ENCODE measurements at regions of chr3 and their contacts with region 1.

Region 1: GRCh38 chr3:62329974-62330373 is 43.4 kb downstream of the FEZF2 start:
- DNase-seq: no peak
- ATAC-seq: no peak
- H3K4me3 ChIP-seq: no peak overlapping the region
- H3K27ac ChIP-seq: no peak overlapping the region
- H3K4me1 ChIP-seq: 0 out of 3 replicates have a peak, but pooled peaks cover 4% of the 10 kb centered on the region
- CTCF ChIP-seq: no peak
- EP300 ChIP-seq: no peak
- POLR2A ChIP-seq: no peak
- RAD21 ChIP-seq: no peak

Region 2: DNA sequence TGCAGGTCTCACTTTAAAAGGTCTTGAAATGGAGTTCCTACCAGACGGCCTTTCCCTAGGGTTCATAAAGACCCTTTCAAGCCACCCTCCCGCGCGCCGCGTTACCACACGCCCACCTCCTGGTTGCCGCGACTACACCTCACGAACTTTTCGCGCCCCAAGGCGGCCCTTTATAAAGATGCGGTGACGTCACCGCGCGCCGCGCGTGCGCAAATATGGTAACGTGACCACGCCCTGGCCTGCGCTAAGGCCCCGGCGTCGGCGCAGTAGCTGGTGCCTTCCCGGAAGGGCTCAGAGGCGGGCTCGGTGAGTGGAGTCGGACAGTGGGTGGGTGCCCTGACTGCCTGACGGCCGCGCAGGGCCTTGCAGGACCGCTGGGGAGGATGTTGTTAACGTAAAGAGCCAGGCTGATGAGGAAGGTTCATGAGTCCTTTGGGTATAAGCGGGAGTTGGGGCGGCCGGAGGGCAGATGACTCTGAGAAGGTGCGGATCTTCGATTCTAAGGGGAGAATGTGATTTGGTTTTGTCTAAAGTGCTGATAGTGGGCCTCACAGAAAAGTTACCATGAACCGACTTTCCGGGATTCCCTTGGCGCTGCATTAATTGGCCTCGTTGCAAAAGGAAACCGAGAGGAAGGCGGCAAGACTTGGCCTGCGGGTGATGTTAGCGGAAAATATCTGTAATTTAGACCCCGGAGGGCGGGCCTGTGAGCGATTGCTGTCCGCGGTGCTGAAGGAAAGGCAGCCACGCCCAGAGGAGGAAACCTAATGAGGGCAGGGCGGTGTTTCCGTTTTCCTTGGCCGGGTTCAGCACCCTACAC is 11.0 kb before region 1 on chr3:
- CTCF ChIA-PET with region 1: no interaction called
- POLR2A ChIA-PET with region 1: no interaction called
- DNase-seq: peak; percentile 38 to 85
- ATAC-seq: peak; percentile 100
- H3K4me3 ChIP-seq: peak overlapping the region; percentile 68
- H3K27ac ChIP-seq: peak overlapping the region; percentile 43 to 83; a peak in 4 of 6 replicates
- H3K4me1 ChIP-seq: no peaks in the 10 kb centered on the region
- CTCF ChIP-seq: no peak
- EP300 ChIP-seq: no peak
- POLR2A ChIP-seq: peak; percentile 59; the same call in 1 of the 2 replicates
- RAD21 ChIP-seq: no peak

Region 3: GRCh38 chr3:62558549-62559112 is 228.7 kb after region 1 on chr3:
- CTCF ChIA-PET with region 1: interaction called, 15 read pairs
- POLR2A ChIA-PET with region 1: no interaction called
- DNase-seq: peak; percentile 2 to 13
- ATAC-seq: peak in 1 of 2 experiments; percentile 73; a peak in 3 of 6 replicates
- H3K4me3 ChIP-seq: no peak overlapping the region
- H3K27ac ChIP-seq: no peak overlapping the region
- H3K4me1 ChIP-seq: no peaks in the 10 kb centered on the region
- CTCF ChIP-seq: peak; percentile 40
- EP300 ChIP-seq: no peak
- POLR2A ChIP-seq: no peak
- RAD21 ChIP-seq: peak; percentile 43 to 53

Measured in A549 (cell line).